ENCODE measurements at regions of chr1 and their contacts with region 1.

Region 1: DNA sequence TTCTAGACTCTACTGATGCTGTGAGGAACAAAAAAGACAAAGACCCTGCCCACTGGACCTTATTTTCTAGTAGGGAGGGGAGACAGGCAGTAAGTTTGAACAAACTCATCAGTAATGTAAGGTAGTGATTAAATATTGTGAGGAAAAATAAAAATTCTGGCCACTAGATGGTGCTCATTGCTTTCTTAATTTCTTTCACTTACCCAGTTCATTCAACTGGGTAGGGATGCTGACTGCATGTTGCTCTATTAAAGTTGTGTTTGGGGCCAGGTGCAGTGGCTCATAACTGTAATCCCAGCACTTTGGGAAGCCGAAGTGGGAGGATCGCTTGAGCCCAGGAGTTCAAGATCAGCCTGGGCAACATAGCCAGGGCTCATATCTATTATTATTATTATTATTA is 6.3 kb upstream of the KYAT3 start:
- DNase-seq: peak in 3 of 35 experiments; percentile 26 to 86 (median 36)
- ATAC-seq: peak; percentile 75 to 87 (median 81)
- H3K4me3 ChIP-seq: no peak overlapping the region
- H3K4me3 Mint-ChIP-seq: no peak overlapping the region
- H3K27ac ChIP-seq: no peak overlapping the region
- H3K27ac Mint-ChIP-seq: no peak overlapping the region
- H3K4me1 ChIP-seq: peaks cover under 1 to 19% of the 10 kb centered on the region in 2 experiments
- H3K4me1 Mint-ChIP-seq: peaks cover 34 to 39% (median 38%) of the 10 kb centered on the region in 3 donors
- H3K27me3 ChIP-seq: no peaks in the 10 kb centered on the region
- H3K27me3 Mint-ChIP-seq: no peaks in the 10 kb centered on the region

Region 2: DNA sequence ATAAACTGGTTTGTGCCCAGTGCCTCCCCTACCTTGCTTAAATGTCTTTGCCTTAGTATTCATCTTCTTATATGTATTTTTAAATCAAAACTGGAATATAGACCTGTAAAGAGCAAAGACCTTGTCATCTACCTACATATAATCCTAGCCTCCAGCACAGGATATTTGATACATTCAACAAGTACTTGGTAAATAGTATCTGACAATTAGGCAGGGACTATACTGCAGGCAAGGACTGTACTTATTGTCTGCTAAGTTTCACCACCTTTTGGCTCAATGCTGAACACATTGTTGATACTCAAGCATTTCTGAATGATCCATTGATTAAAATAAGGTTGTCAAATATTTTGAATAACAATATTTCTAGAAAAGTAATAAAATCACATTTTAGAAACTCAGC is 218.2 kb before region 1 on chr1:
- CTCF ChIA-PET with region 1: no interaction called
- POLR2A ChIA-PET with region 1: no interaction called
- DNase-seq: no peak
- ATAC-seq: no peak
- H3K4me3 ChIP-seq: no peak overlapping the region
- H3K4me3 Mint-ChIP-seq: no peak overlapping the region
- H3K27ac ChIP-seq: no peak overlapping the region
- H3K27ac Mint-ChIP-seq: no peak overlapping the region
- H3K4me1 ChIP-seq: no peaks in the 10 kb centered on the region
- H3K4me1 Mint-ChIP-seq: no peaks in the 10 kb centered on the region
- H3K27me3 ChIP-seq: no peaks in the 10 kb centered on the region
- H3K27me3 Mint-ChIP-seq: no peaks in the 10 kb centered on the region

Region 3: GRCh38 chr1:89454845-89455521 is 456.3 kb after region 1 on chr1:
- CTCF ChIA-PET with region 1: interaction called, 4 to 17 read pairs
- POLR2A ChIA-PET with region 1: no interaction called
- DNase-seq: peak; percentile 8 to 79 (median 49)
- ATAC-seq: peak; percentile 75 to 91 (median 79)
- H3K4me3 ChIP-seq: no peak overlapping the region
- H3K4me3 Mint-ChIP-seq: no peak overlapping the region
- H3K27ac ChIP-seq: no peak overlapping the region
- H3K27ac Mint-ChIP-seq: no peak overlapping the region
- H3K4me1 ChIP-seq: peaks cover 0 to 2% of the 10 kb centered on the region in 2 experiments
- H3K4me1 Mint-ChIP-seq: peaks cover 9 to 12% (median 11%) of the 10 kb centered on the region in 3 donors
- H3K27me3 ChIP-seq: no peaks in the 10 kb centered on the region
- H3K27me3 Mint-ChIP-seq: peaks cover 7 to 21% of the 10 kb centered on the region in 2 donors

Region 4: GRCh38 chr1:89876463-89876862 is 877.7 kb after region 1 on chr1:
- CTCF ChIA-PET with region 1: no interaction called
- POLR2A ChIA-PET with region 1: interaction called in 1 of 2 experiments, 10 read pairs
- DNase-seq: no peak
- ATAC-seq: no peak
- H3K4me3 ChIP-seq: no peak overlapping the region
- H3K4me3 Mint-ChIP-seq: no peak overlapping the region
- H3K27ac ChIP-seq: no peak overlapping the region
- H3K27ac Mint-ChIP-seq: peak overlapping the region in 1 of 2 donors; percentile 18
- H3K4me1 ChIP-seq: peaks cover 7 to 35% of the 10 kb centered on the region in 2 experiments
- H3K4me1 Mint-ChIP-seq: peaks cover 58 to 68% (median 62%) of the 10 kb centered on the region in 3 donors
- H3K27me3 ChIP-seq: no peaks in the 10 kb centered on the region
- H3K27me3 Mint-ChIP-seq: no peaks in the 10 kb centered on the region